Heart right ventricle (tissue), 16 donors: ENCODE measurements at regions of chr11 and their contacts with region 1.

Region 1: DNA sequence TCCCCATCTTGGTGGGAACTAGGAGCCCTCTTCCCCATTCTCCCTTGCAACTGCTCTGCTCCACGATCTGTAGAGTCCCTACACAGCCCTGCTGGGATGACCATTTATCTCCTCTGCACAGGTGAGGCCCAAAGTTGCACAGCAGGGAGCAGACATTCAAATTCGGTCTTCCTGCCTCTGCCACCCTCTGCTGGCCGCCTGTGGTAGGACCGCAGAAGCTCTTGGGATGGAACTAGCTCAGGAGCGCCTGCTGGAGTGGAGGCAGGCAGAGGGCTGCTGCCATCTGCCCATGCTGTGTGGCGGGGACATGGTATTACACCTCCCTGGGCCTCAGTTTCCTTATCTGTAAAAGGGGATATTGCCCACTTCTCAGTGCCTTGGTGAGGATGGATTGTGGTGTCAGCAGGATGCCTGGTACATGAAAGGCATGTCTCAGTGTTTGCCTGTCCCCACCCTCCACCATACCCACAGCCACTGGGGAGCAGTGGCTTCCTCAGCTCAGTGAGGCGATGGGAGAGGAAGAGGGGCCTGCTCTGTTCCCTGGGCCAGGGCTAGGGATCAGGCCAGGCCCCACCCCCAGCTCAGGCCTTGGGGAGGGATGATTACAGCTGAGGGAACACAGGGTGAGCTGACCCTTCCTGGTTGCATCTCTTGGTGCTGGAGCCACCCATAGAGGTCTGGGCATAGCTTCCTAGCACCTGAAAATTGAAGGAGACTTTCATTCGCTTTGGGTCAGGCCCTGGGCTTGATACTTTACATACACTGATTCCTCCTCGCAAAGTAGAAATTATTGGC is 11.3 kb upstream of the OMP start:
- DNase-seq: peak; percentile 78 to 80
- ATAC-seq: peak; percentile 68 to 80 (median 78)
- H3K4me3 ChIP-seq: no peak overlapping the region
- H3K27ac ChIP-seq: no peak overlapping the region
- H3K4me1 ChIP-seq: peaks cover 0 to 8% (median 0%) of the 10 kb centered on the region in 9 donors
- H3K27me3 ChIP-seq: no peaks in the 10 kb centered on the region
- CTCF ChIP-seq: peak; percentile 80 to 94 (median 91)

Region 2: DNA sequence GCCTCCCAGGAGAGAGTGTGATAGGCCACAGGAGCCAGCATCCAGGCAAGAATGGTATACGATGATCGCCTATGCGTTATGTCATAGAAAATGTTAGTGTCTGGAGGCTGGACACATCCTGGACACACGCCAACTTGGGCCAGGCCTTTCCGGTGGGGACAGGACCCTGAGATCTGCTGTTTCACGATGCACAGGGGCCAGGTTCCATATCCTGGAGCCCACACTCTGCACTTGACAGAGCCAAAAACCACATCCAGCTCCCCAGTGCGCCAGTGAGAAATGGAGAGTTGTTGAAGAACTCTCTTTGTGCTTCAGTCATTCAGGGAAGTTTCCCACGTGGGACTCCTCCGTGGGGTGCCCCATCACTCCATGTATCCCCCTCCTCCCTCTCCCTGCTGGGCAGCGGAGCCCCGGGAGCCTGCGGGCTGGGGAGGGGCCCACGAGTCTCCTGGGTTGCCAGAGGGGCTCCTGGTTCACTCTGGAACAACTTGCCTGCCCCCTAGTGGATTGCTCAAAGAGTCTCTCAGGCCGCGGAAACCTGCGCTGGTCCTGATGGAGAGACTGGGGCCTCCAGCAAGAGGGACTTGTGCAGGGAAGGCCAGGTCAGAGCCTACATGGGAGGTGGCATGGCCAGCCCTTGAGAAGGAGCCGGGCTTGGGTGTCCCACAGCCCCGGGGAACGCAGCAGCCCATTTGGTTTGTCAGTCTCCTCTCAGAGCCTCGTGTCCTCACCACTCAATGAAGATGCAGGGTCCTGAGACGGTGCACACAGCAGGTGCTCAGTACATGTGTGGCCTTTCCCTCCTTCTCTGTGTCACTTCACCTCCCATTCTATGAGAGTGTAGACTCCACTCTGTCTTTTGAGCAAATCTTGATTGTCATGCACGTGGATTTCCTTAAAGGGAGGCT is 410.6 kb before region 1 on chr11:
- intact Hi-C with region 1: no loop called
- DNase-seq: peak; percentile 66 to 87
- ATAC-seq: peak; percentile 79 to 91 (median 84)
- H3K4me3 ChIP-seq: no peak overlapping the region
- H3K27ac ChIP-seq: peak overlapping the region in 1 of 10 donors; percentile 5
- H3K4me1 ChIP-seq: peaks cover 0 to 21% (median 9%) of the 10 kb centered on the region in 9 donors
- H3K27me3 ChIP-seq: no peaks in the 10 kb centered on the region
- CTCF ChIP-seq: peak; percentile 78 to 96 (median 90)

Region 3: GRCh38 chr11:76721755-76722677 is 369.3 kb before region 1 on chr11:
- intact Hi-C with region 1: loop called in 2 of 10 experiments (anchors 1 to 10 kb)
- DNase-seq: peak; percentile 84 to 85
- ATAC-seq: peak; percentile 86 to 97 (median 92)
- H3K4me3 ChIP-seq: peak overlapping the region in 3 of 10 donors; percentile 16 to 20 (median 20)
- H3K27ac ChIP-seq: no peak overlapping the region
- H3K4me1 ChIP-seq: peaks cover 0 to 12% (median 7%) of the 10 kb centered on the region in 9 donors
- H3K27me3 ChIP-seq: peaks cover 0 to 23% (median 5%) of the 10 kb centered on the region in 7 donors
- CTCF ChIP-seq: peak; percentile 75 to 94 (median 91)

Region 4: GRCh38 chr11:76927160-76927559 is 164.2 kb before region 1 on chr11:
- intact Hi-C with region 1: loop called in 4 of 10 experiments (anchors 5 to 10 kb)
- DNase-seq: no peak
- ATAC-seq: no peak
- H3K4me3 ChIP-seq: no peak overlapping the region
- H3K27ac ChIP-seq: no peak overlapping the region
- H3K4me1 ChIP-seq: no peaks in the 10 kb centered on the region
- H3K27me3 ChIP-seq: no peaks in the 10 kb centered on the region
- CTCF ChIP-seq: no peak

Region 5: DNA sequence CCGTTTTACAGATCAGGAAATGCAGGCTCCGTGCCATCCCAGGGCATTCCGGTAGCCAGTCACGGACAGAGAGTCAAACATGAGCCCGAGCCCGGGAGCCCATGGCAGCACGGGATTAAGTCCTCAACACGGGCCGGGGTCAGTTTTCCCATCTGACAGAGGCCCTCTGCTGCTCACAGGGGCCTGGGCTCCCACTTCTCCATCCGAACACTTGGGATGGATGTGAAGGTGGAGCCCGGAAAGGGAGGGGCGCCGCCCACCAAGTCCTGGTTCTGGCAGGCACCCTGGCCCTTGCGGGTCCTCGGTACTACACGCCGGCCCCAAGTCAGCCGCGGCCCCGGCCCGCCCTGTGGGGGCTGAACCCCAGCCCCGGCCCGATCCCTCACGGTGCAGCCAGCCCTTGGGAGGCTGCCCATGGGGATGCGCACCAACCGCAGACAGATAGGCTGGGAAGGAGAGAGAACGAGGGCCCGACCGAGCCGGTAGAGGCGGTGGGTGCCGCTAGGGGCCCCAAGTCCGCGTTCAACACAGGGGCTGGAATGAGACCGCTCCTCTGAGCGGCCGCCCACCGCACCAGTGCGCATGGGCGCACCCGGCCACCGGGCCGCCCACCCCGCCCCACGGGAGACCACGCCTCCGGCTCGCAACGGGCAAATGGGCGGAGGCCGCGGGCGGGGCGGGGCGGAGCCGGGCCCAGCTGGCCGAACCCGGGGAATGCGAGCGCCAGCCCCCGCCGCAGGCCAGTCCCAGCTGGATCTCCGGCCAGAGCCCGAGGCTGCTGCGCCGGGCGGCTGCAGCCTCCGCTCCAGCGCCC is 24.9 kb before region 1 on chr11 and contains the start of gene CAPN5:
- intact Hi-C with region 1: loop called in 1 of 10 experiments (anchors 1 kb)
- DNase-seq: peak; percentile 92 to 95
- ATAC-seq: peak; percentile 97 to 98 (median 97)
- H3K4me3 ChIP-seq: peak within 1 kb of the TSS; percentile 44 to 90 (median 68)
- H3K27ac ChIP-seq: peak within 1 kb of the TSS; percentile 24 to 93 (median 88)
- H3K4me1 ChIP-seq: peaks cover 0 to 20% (median 10%) of the 10 kb centered on the region in 9 donors
- H3K27me3 ChIP-seq: no peaks in the 10 kb centered on the region
- CTCF ChIP-seq: peak in 7 of 9 donors; percentile 7 to 49 (median 31)
- total RNA-seq, gene CAPN5: 1.8 to 3.6 (median 2.7) TPM

Region 6: DNA sequence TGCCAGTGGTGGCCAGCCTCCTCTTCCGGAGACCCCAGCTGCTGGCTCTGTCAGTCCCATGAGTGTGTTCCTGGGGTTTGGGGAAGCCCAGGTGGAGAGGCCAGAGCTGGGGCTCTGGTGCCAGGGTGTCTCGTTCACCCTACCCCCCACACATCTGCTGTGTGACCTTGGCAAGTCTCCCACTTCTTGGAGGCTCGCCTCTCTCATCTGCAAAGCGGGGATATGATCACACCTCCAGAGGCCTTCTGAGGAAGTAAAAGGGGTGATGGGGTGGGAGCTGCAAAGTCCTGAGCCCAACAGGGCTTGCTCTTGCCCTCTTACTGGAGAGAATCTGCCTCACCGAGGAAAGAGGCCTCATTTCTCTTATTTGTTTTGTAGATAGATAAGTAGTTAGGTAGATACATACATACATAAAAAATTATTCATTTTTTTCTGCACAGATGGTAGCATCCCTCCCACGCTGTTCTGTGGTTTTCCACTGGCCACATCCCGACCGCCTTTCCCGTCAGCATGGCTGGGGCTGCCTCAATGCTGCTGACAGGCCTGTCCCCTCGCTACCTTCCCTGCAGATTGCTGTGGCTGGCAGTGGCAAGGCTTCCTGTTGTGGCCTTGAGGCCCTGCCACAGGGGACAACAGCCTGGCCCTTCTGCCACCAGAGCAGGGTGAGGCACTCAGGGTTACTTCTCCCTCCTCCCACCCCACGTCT is 60.6 kb after region 1 on chr11:
- intact Hi-C with region 1: no loop called
- DNase-seq: no peak
- ATAC-seq: no peak
- H3K4me3 ChIP-seq: no peak overlapping the region
- H3K27ac ChIP-seq: peak overlapping the region in 1 of 10 donors; percentile 21
- H3K4me1 ChIP-seq: peaks cover 0 to 39% (median 21%) of the 10 kb centered on the region in 9 donors
- H3K27me3 ChIP-seq: peaks cover 0 to 10% (median 0%) of the 10 kb centered on the region in 7 donors
- CTCF ChIP-seq: no peak

Region 7: DNA sequence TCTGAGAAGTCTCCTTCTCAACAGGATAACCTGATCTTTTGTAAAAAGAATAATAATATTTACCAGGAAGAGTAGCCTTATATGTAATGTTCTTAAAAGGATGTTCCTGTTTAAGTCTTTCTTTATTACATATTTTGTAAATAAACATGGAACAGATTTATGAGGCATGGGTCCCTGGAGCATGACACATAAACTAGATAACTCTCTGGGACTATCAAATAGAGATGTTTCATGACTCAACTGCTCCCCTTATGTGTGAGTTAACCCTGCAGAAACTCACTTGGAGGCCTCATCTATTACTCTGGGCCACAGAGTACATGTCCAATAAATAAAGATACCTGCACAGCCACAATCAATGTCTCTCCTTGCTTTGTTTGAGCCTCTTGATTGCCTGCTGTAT is 145.6 kb after region 1 on chr11:
- intact Hi-C with region 1: no loop called
- DNase-seq: no peak
- ATAC-seq: no peak
- H3K4me3 ChIP-seq: no peak overlapping the region
- H3K27ac ChIP-seq: no peak overlapping the region
- H3K4me1 ChIP-seq: no peaks in the 10 kb centered on the region
- H3K27me3 ChIP-seq: peaks cover 0 to 11% (median 0%) of the 10 kb centered on the region in 7 donors
- CTCF ChIP-seq: no peak